Psoas muscle (tissue), 8 donors: ENCODE measurements at regions of chr6 and their contacts with region 1.

Region 1: DNA sequence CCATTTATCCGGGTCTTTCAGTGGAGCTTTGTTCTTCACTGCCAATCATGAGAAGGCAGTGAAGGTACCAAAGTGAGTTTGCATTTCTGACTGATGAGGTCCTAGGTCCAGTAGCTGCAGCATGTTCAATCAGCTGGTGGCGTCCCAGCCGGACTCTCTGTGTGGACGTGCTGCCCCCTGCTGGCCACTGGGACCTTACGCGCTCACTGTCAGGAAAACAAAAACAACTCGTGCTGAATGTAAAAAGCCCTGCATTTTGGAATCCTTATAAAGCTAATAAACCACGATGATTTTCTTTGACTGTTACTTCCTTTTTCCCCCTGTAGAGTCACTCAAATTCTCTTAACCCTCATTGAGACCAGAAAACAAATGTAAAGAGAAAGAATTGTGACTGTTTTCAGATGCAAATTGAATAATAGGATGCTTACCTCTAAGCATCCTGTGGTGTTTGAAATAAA is 4.9 kb upstream of the CD24 start:
- DNase-seq: peak; percentile 85 to 91
- ATAC-seq: peak; percentile 87 to 94 (median 89)
- H3K4me3 ChIP-seq: no peak overlapping the region
- H3K27ac ChIP-seq: no peak overlapping the region
- H3K4me1 ChIP-seq: peaks cover under 1% of the 10 kb centered on the region
- H3K27me3 ChIP-seq: peaks cover 0 to 49% (median 5%) of the 10 kb centered on the region in 3 donors
- CTCF ChIP-seq: peak; percentile 93

Region 2: GRCh38 chr6:106608062-106608668 is 371.3 kb before region 1 on chr6:
- intact Hi-C with region 1: loop called (anchors 2 to 10 kb)
- DNase-seq: no peak
- ATAC-seq: peak in 2 of 4 donors; percentile 73 to 76
- H3K4me3 ChIP-seq: no peak overlapping the region
- H3K27ac ChIP-seq: no peak overlapping the region
- H3K4me1 ChIP-seq: peaks cover 10% of the 10 kb centered on the region
- H3K27me3 ChIP-seq: no peaks in the 10 kb centered on the region
- CTCF ChIP-seq: peak; percentile 54